Vagina (tissue), 2 donors: ENCODE measurements at regions of chr18 and their contacts with region 1.

Region 1: DNA sequence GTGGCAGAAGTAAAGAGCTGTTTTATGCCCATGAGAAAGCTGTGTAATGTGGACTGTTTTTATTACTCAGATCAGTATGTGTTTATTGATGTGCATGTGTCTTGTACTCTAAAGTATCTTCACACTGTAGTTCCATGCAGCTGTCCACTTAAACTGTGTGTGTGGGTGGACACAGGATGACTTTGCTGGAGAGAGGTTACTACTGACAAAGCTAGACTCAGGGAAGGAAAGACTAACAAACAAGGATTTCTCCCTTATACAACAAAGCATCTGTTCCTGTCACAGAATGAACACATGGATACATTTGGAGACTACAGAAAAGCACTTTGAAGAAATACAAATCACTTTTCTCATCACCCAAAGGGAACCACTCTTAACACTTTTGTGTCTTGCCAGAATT is 10.0 kb downstream of the FHOD3 start:
- DNase-seq: peak; percentile 16 to 27
- H3K4me3 ChIP-seq: no peak overlapping the region
- H3K27ac ChIP-seq: no peak overlapping the region
- H3K4me1 ChIP-seq: no peaks in the 10 kb centered on the region
- H3K27me3 ChIP-seq: no peaks in the 10 kb centered on the region
- CTCF ChIP-seq: no peak
- POLR2A ChIP-seq: no peak

Region 2: GRCh38 chr18:36333414-36333813 is 25.9 kb after region 1 on chr18:
- intact Hi-C with region 1: loop called (anchors 1 kb)
- DNase-seq: peak in 1 of 2 donors; percentile 70
- H3K4me3 ChIP-seq: no peak overlapping the region
- H3K27ac ChIP-seq: no peak overlapping the region
- H3K4me1 ChIP-seq: no peaks in the 10 kb centered on the region
- H3K27me3 ChIP-seq: no peaks in the 10 kb centered on the region
- CTCF ChIP-seq: no peak
- POLR2A ChIP-seq: no peak